MCF 10A (cell line): ENCODE measurements at regions of chr2 and their contacts with region 1.

Region 1: GRCh38 chr2:148509288-148509902 is 135.2 kb upstream of the EPC2 start:
- DNase-seq: peak; percentile 88
- H3K4me3 Mint-ChIP-seq: peak overlapping the region; percentile 67
- H3K27ac Mint-ChIP-seq: peak overlapping the region; percentile 36
- H3K4me1 Mint-ChIP-seq: peaks cover 8% of the 10 kb centered on the region
- H3K27me3 Mint-ChIP-seq: no peaks in the 10 kb centered on the region
- CTCF ChIP-seq: peak; percentile 93

Region 2: GRCh38 chr2:147937744-147938349 is 571.5 kb before region 1 on chr2:
- CTCF ChIA-PET with region 1: interaction called, 15 read pairs
- POLR2A ChIA-PET with region 1: interaction called, 3 read pairs
- intact Hi-C with region 1: loop called (anchors 1 kb)
- DNase-seq: peak; percentile 48
- H3K4me3 Mint-ChIP-seq: no peak overlapping the region
- H3K27ac Mint-ChIP-seq: no peak overlapping the region
- H3K4me1 Mint-ChIP-seq: no peaks in the 10 kb centered on the region
- H3K27me3 Mint-ChIP-seq: no peaks in the 10 kb centered on the region
- CTCF ChIP-seq: peak; percentile 75

Region 3: GRCh38 chr2:148020111-148021058 is 489.0 kb before region 1 on chr2 and contains the start of gene ORC4:
- CTCF ChIA-PET with region 1: interaction called, 14 read pairs
- POLR2A ChIA-PET with region 1: interaction called, 8 read pairs
- intact Hi-C with region 1: no loop called
- DNase-seq: peak; percentile 100
- H3K4me3 Mint-ChIP-seq: peak within 1 kb of the TSS; percentile 90
- H3K27ac Mint-ChIP-seq: peak within 1 kb of the TSS; percentile 74
- H3K4me1 Mint-ChIP-seq: peaks cover 38% of the 10 kb centered on the region
- H3K27me3 Mint-ChIP-seq: no peaks in the 10 kb centered on the region
- CTCF ChIP-seq: peak; percentile 34
- total RNA-seq, gene ORC4: 38.0 and 53.3 TPM in 2 replicates

Region 4: GRCh38 chr2:148244587-148245292 is 264.7 kb before region 1 on chr2:
- CTCF ChIA-PET with region 1: no interaction called
- POLR2A ChIA-PET with region 1: no interaction called
- intact Hi-C with region 1: no loop called
- DNase-seq: peak; percentile 23
- H3K4me3 Mint-ChIP-seq: no peak overlapping the region
- H3K27ac Mint-ChIP-seq: peak overlapping the region; percentile 19
- H3K4me1 Mint-ChIP-seq: peaks cover 6% of the 10 kb centered on the region
- H3K27me3 Mint-ChIP-seq: no peaks in the 10 kb centered on the region
- CTCF ChIP-seq: no peak

Region 5: GRCh38 chr2:148303161-148303560 is 206.2 kb before region 1 on chr2:
- CTCF ChIA-PET with region 1: interaction called, 5 read pairs
- POLR2A ChIA-PET with region 1: no interaction called
- intact Hi-C with region 1: loop called (anchors 10 kb)
- DNase-seq: no peak
- H3K4me3 Mint-ChIP-seq: no peak overlapping the region
- H3K27ac Mint-ChIP-seq: no peak overlapping the region
- H3K4me1 Mint-ChIP-seq: no peaks in the 10 kb centered on the region
- H3K27me3 Mint-ChIP-seq: no peaks in the 10 kb centered on the region
- CTCF ChIP-seq: no peak

Region 6: DNA sequence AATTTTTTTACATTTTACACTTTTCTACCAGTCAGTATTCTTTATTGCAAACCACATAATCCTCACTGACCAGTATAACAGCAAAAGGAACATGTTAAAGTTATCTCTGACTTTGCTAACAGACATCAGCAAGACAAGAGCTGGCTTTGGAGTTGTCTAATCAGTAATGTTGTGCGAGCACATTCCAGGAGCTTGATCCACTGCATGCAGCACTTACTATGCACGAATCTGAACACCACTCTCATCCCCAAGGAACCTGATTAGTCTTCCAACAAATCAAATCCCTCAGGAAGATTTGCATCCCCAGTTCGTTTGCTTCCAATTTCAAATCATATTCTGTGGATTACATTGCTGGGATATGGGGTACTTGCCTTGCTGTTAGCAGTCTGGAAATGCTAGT is 134.2 kb before region 1 on chr2:
- CTCF ChIA-PET with region 1: no interaction called
- POLR2A ChIA-PET with region 1: no interaction called
- intact Hi-C with region 1: no loop called
- DNase-seq: no peak
- H3K4me3 Mint-ChIP-seq: no peak overlapping the region
- H3K27ac Mint-ChIP-seq: no peak overlapping the region
- H3K4me1 Mint-ChIP-seq: no peaks in the 10 kb centered on the region
- H3K27me3 Mint-ChIP-seq: no peaks in the 10 kb centered on the region
- CTCF ChIP-seq: no peak

Region 7: GRCh38 chr2:148521181-148521580 is 11.8 kb after region 1 on chr2:
- CTCF ChIA-PET with region 1: interaction called, 27 read pairs
- POLR2A ChIA-PET with region 1: interaction called, 3 read pairs
- intact Hi-C with region 1: no loop called
- DNase-seq: no peak
- H3K4me3 Mint-ChIP-seq: no peak overlapping the region
- H3K27ac Mint-ChIP-seq: no peak overlapping the region
- H3K4me1 Mint-ChIP-seq: no peaks in the 10 kb centered on the region
- H3K27me3 Mint-ChIP-seq: no peaks in the 10 kb centered on the region
- CTCF ChIP-seq: no peak